Dorsolateral prefrontal cortex (tissue), 120 donors: ENCODE measurements at regions of chr19 and their contacts with region 1.

Region 1: GRCh38 chr19:18985257-18985656 is 44.2 kb upstream of the HOMER3 start:
- DNase-seq: peak in 3 of 10 donors; percentile 34 to 47 (median 45)
- H3K4me3 ChIP-seq: peak overlapping the region in 2 of 59 donors; percentile 4 to 14
- H3K27ac ChIP-seq: peak overlapping the region in 50 of 59 donors; percentile 4 to 82 (median 64)
- H3K27me3 ChIP-seq: no peaks in the 10 kb centered on the region
- CTCF ChIP-seq: peak in 1 of 56 donors; percentile 16

Region 2: DNA sequence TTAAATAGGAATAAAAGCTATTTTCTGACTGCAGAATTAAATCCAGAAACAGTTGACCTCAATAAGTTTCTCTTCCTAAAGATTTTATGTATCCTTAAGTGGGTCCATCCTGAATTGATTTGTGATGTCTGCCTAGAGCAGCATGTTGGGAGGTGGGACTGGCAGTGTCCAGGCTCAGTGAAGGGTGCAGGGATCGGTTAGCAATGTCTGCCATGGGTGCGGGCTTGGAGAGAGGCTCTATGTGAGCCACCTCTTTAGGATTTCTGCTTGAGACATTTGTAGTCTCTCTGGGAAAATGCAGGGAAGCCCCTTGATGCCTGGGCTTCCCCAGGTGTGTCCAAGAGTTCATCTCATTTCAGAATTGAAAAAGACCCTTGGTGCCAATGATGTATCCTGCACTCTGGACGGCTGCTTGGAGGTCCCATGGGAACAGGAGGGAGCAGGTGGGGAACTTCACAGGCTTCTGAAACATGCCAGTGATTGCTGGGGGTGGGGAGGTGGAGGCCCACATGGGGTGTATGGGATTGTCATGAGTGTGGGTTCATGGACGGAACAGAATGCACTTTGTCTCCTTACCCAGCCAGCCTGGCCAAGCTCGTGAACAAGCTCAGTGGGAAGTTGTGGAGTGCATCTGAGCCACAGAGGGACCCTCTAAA is 1436.0 kb before region 1 on chr19:
- intact Hi-C with region 1: no loop called
- DNase-seq: no peak
- H3K4me3 ChIP-seq: no peak overlapping the region
- H3K27ac ChIP-seq: no peak overlapping the region
- H3K27me3 ChIP-seq: no peaks in the 10 kb centered on the region
- CTCF ChIP-seq: no peak

Region 3: GRCh38 chr19:18895038-18895823 is 90.0 kb before region 1 on chr19:
- intact Hi-C with region 1: no loop called
- DNase-seq: peak; percentile 66 to 91 (median 88)
- H3K4me3 ChIP-seq: peak overlapping the region; percentile 61 to 94 (median 81)
- H3K27ac ChIP-seq: peak overlapping the region; percentile 83 to 100 (median 98)
- H3K27me3 ChIP-seq: peaks cover 0 to 3% (median 0%) of the 10 kb centered on the region in 45 donors
- CTCF ChIP-seq: peak in 54 of 56 donors; percentile 32 to 77 (median 57)

Region 4: GRCh38 chr19:18939922-18940768 is 45.1 kb before region 1 on chr19:
- intact Hi-C with region 1: loop called in 1 of 2 experiments (anchors 1 kb)
- DNase-seq: peak in 7 of 10 donors; percentile 8 to 60 (median 42)
- H3K4me3 ChIP-seq: peak overlapping the region; percentile 40 to 82 (median 70)
- H3K27ac ChIP-seq: peak overlapping the region in 51 of 59 donors; percentile 7 to 88 (median 72)
- H3K27me3 ChIP-seq: no peaks in the 10 kb centered on the region
- CTCF ChIP-seq: peak in 2 of 56 donors; percentile 12 to 17